ENCODE measurements at regions of chr15 and their contacts with region 1.

Region 1: DNA sequence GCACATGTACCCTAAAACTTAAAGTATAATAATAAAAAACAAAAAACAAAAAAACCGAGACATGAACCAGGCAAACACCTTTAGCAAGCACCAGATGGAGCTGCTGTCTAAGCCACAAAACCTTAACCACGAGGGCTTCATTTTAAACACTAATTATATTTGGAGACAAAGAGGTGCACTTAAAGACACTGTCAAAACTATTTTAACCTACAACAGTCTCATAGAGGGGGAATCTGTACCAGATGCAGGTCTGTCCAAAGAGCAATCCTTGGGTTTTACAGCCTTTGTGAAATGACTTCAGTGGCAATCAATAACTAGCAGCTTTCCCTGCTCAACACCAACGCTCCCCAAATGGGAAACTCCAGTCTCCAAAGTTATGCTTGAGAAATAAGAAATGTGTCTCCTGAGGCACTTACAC is 115.7 kb upstream of the TSPAN3 start:
- DNase-seq: peak; percentile 66
- H3K4me3 ChIP-seq: no peak overlapping the region
- H3K27ac ChIP-seq: peak overlapping the region; percentile 92
- H3K4me1 ChIP-seq: peaks cover 33% of the 10 kb centered on the region
- H3K27me3 ChIP-seq: no peaks in the 10 kb centered on the region
- CTCF ChIP-seq: peak; percentile 30 to 56
- POLR2A ChIP-seq: no peak

Region 2: DNA sequence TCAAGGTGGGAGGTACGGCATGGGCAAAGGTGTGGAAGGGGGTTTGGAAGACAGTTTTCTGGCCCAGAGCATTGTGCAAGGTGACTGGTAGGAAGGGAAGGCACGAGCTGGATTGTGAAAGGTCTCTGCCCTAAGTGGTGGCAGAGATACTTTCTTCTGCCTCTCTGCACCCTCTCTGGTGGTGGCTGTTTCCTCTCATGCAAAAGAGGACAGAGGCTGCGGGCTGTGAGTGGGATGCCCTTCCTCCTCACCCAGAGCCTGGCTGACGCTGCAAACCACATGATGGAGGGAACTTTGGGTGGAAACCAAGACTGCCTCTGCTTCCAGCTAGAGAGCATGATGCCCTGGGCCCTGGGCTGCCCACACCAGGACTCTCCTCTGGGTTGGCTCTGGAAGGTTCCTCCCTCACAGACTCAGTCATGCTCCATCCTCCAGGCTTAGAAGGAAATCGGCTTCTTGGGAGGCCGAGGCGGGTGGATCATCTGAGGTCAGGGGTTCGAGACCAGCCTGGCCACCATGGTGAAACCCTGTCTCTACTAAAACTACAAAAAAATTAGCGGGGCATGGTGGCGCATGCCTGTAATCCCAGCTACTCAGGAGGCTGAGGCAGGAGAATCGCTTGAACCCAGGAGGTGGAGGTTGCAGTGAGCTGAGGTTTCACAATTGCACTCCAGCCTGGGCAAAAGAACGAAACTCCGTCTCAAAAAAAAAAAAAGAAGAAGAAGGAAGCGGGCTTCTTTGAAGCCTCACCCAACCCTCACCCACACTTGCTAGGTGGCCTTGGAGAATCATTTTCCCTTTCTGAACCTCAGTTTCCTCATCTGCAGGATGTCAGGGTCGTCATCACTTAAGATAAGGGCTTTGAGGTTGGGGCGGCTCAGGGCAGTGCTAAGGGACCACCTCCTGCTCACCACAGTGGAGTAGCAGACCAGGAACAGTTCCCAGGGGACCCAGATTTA is 183.4 kb before region 1 on chr15:
- CTCF ChIA-PET with region 1: no interaction called
- POLR2A ChIA-PET with region 1: no interaction called
- dilution Hi-C with region 1: no loop called
- intact Hi-C with region 1: no loop called
- DNase-seq: no peak
- H3K4me3 ChIP-seq: no peak overlapping the region
- H3K27ac ChIP-seq: no peak overlapping the region
- H3K4me1 ChIP-seq: no peaks in the 10 kb centered on the region
- H3K27me3 ChIP-seq: peaks cover 1 to 2% of the 10 kb centered on the region in 2 experiments
- CTCF ChIP-seq: no peak
- POLR2A ChIP-seq: no peak

Region 3: GRCh38 chr15:77024271-77025082 is 162.1 kb before region 1 on chr15:
- CTCF ChIA-PET with region 1: no interaction called
- POLR2A ChIA-PET with region 1: no interaction called
- dilution Hi-C with region 1: no loop called
- intact Hi-C with region 1: loop called (anchors 5 kb)
- DNase-seq: peak; percentile 40
- H3K4me3 ChIP-seq: no peak overlapping the region
- H3K27ac ChIP-seq: no peak overlapping the region
- H3K4me1 ChIP-seq: peaks cover 11% of the 10 kb centered on the region
- H3K27me3 ChIP-seq: no peaks in the 10 kb centered on the region
- CTCF ChIP-seq: peak; percentile 91
- POLR2A ChIP-seq: no peak

Region 4: DNA sequence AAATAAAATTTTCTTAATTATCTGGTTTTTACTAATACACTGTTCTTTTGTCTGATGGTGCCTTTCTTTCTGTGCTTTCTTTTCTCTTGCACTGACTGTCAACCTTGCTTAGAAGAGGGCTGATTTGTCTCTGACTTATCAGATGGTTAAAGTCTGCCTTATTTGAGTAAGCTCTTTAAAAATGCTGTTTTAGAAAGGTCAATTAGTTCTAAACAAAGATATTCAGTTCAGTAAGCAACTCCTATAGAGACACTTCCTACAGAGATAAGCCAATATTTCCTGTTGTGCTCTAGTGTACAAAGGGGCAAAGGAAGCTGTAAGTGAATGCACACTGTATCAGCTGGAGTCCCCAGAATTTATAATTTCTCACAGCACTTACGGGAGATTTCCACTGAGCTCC is 37.7 kb after region 1 on chr15:
- CTCF ChIA-PET with region 1: interaction called, 10 read pairs
- POLR2A ChIA-PET with region 1: no interaction called
- dilution Hi-C with region 1: no loop called
- intact Hi-C with region 1: loop called (anchors 1 kb)
- DNase-seq: peak; percentile 72
- H3K4me3 ChIP-seq: peak overlapping the region in 1 of 3 experiments; percentile 18
- H3K27ac ChIP-seq: peak overlapping the region; percentile 44
- H3K4me1 ChIP-seq: peaks cover 35% of the 10 kb centered on the region
- H3K27me3 ChIP-seq: no peaks in the 10 kb centered on the region
- CTCF ChIP-seq: no peak
- POLR2A ChIP-seq: peak; percentile 22

Region 5: DNA sequence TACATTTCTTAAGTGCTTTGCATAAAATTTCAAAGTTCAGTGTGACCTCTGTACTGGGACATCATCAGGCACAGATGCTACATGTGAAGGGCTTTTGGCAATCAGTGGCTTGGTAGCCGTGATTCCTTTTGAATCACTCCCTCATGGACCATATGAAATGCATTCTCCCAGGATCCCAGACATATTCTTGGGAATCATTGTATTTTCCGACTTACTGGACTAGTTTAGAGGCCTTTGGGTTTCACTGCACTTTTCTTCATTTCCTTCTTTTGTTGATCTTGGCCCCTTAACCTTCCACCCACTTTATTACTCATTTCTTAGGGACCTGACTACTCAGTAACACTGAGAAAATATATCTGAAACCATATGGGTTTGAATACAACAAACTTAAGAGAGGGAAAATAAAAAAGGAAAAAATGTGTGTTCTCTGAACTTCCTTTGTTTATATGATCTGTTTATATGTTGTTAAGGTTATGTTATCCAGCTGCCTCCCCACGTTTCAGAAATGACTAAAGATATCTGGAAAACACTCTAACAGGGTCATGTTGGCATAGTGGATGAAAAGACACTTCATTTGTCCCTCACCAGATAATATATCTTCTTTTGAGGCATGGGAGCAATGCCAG is 269.2 kb after region 1 on chr15:
- CTCF ChIA-PET with region 1: no interaction called
- POLR2A ChIA-PET with region 1: no interaction called
- dilution Hi-C with region 1: no loop called
- intact Hi-C with region 1: loop called (anchors 1 kb)
- DNase-seq: peak; percentile 95
- H3K4me3 ChIP-seq: peak overlapping the region in 1 of 3 experiments; percentile 23
- H3K27ac ChIP-seq: peak overlapping the region; percentile 96
- H3K4me1 ChIP-seq: peaks cover 54% of the 10 kb centered on the region
- H3K27me3 ChIP-seq: no peaks in the 10 kb centered on the region
- CTCF ChIP-seq: no peak
- POLR2A ChIP-seq: no peak

Region 6: GRCh38 chr15:77482570-77482969 is 296.0 kb after region 1 on chr15:
- CTCF ChIA-PET with region 1: interaction called, 15 read pairs
- POLR2A ChIA-PET with region 1: no interaction called
- dilution Hi-C with region 1: no loop called
- intact Hi-C with region 1: no loop called
- DNase-seq: peak; percentile 87
- H3K4me3 ChIP-seq: no peak overlapping the region
- H3K27ac ChIP-seq: peak overlapping the region; percentile 76
- H3K4me1 ChIP-seq: peaks cover 67% of the 10 kb centered on the region
- H3K27me3 ChIP-seq: no peaks in the 10 kb centered on the region
- CTCF ChIP-seq: no peak
- POLR2A ChIP-seq: no peak

Region 7: GRCh38 chr15:77507911-77508310 is 321.3 kb after region 1 on chr15:
- CTCF ChIA-PET with region 1: interaction called, 18 read pairs
- POLR2A ChIA-PET with region 1: no interaction called
- dilution Hi-C with region 1: no loop called
- intact Hi-C with region 1: no loop called
- DNase-seq: peak; percentile 82
- H3K4me3 ChIP-seq: peak overlapping the region in 1 of 3 experiments; percentile 20
- H3K27ac ChIP-seq: peak overlapping the region; percentile 95
- H3K4me1 ChIP-seq: peaks cover 39% of the 10 kb centered on the region
- H3K27me3 ChIP-seq: no peaks in the 10 kb centered on the region
- CTCF ChIP-seq: no peak
- POLR2A ChIP-seq: no peak

Measured in endothelial cell of umbilical vein (primary cell).